ENCODE measurements at regions of chr15 and their contacts with region 1.

Region 1: DNA sequence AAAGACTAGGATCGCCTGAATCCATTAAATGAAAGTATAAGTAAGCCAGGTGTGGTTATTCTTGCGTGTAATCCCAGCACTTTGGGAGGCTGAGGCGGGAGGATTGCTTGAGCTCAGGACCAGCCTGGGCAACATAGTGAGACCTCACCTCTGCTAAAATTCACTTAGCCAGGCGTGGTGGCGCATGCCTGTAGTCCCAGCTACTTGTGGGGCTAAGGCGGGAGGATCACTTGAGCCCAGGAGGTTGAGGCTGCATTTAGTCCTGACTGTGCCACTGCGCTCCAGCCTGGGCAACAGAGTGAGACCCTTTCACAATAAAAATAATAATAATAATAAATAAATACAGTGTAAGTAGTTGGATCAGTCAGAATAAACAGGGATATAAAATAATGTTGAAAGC is 25.5 kb upstream of the HYKK start:
- DNase-seq: no peak
- H3K4me3 Mint-ChIP-seq: no peak overlapping the region
- H3K27ac Mint-ChIP-seq: no peak overlapping the region
- H3K4me1 Mint-ChIP-seq: peaks cover 3% of the 10 kb centered on the region
- H3K27me3 Mint-ChIP-seq: no peaks in the 10 kb centered on the region

Region 2: GRCh38 chr15:78315686-78316282 is 166.1 kb before region 1 on chr15:
- intact Hi-C with region 1: loop called (anchors 10 kb)
- DNase-seq: no peak
- H3K4me3 Mint-ChIP-seq: no peak overlapping the region
- H3K27ac Mint-ChIP-seq: no peak overlapping the region
- H3K4me1 Mint-ChIP-seq: no peaks in the 10 kb centered on the region
- H3K27me3 Mint-ChIP-seq: peaks cover 2% of the 10 kb centered on the region